ENCODE measurements at regions of chr6 and their contacts with region 1.

Region 1: DNA sequence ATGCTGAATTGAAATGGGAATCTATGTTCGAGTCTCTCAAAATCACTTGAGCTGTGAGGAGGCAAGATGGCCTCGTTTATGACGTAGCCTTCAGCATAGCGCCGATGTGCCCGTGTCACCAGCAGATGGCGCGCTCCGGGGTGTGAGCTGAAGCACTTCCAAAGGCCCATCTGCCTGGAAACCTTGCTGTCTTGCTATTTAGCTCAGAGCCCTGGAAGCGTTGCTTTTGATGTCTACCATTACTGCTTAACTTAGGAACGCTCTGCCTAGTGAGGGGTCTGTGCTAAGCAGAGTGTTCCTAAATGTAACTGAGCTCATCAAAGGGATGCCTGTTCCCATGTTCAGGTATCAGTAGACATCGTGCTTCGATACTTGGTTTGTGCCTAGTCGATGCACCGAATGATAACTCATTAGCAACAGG is 67.7 kb downstream of the SYCP2L start:
- DNase-seq: peak; percentile 91
- H3K4me3 ChIP-seq: no peak overlapping the region
- H3K27ac ChIP-seq: no peak overlapping the region
- H3K4me1 ChIP-seq: peaks cover 0 to 13% (median 12%) of the 10 kb centered on the region in 4 donors
- H3K27me3 ChIP-seq: no peaks in the 10 kb centered on the region
- CTCF ChIP-seq: peak; percentile 45 to 57 (median 46)
- EP300 ChIP-seq: no peak
- POLR2A ChIP-seq: no peak

Region 2: GRCh38 chr6:10510592-10511367 is 443.8 kb before region 1 on chr6:
- intact Hi-C with region 1: no loop called
- DNase-seq: no peak
- H3K4me3 ChIP-seq: peak overlapping the region; percentile 4 to 22 (median 20)
- H3K27ac ChIP-seq: peak overlapping the region; percentile 68 to 74 (median 70)
- H3K4me1 ChIP-seq: peaks cover 14 to 19% (median 18%) of the 10 kb centered on the region in 4 donors
- H3K27me3 ChIP-seq: no peaks in the 10 kb centered on the region
- CTCF ChIP-seq: peak; percentile 71 to 78 (median 74)
- EP300 ChIP-seq: no peak
- POLR2A ChIP-seq: no peak

Region 3: GRCh38 chr6:11064836-11065235 is 110.2 kb after region 1 on chr6:
- intact Hi-C with region 1: loop called (anchors 5 kb)
- DNase-seq: no peak
- H3K4me3 ChIP-seq: no peak overlapping the region
- H3K27ac ChIP-seq: no peak overlapping the region
- H3K4me1 ChIP-seq: no peaks in the 10 kb centered on the region
- H3K27me3 ChIP-seq: no peaks in the 10 kb centered on the region
- CTCF ChIP-seq: no peak
- EP300 ChIP-seq: no peak
- POLR2A ChIP-seq: no peak

Measured in esophagus muscularis mucosa (tissue), 4 donors.